Brain microvascular endothelial cell (primary cell): ENCODE measurements at regions of chr5 and their contacts with region 1.

Region 1: DNA sequence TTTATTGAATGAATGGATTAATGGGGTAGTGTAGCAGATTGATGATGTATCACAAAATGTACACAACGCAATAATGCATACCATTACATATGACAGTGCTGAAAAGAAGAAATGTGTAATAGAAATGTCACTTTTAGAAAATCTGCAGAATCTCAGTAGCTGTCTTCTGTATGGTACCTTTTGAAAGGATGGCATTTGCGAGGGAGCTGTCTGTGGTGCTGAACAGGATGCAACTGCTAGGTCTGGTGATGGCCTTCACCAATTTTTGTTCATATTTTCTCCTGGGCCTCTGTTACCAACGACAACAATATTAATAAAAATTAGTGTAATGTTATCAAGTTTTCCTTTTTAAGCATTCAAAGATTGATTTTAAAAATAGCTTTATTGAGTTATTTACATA is 36.2 kb upstream of the OTULIN start:
- DNase-seq: peak; percentile 50
- H3K4me3 ChIP-seq: no peak overlapping the region
- H3K27ac ChIP-seq: no peak overlapping the region
- H3K27me3 ChIP-seq: peaks cover 2% of the 10 kb centered on the region
- CTCF ChIP-seq: no peak

Region 2: GRCh38 chr5:14399054-14399692 is 229.2 kb before region 1 on chr5:
- in situ Hi-C with region 1: loop called (anchors 25 kb)
- DNase-seq: peak; percentile 68
- H3K4me3 ChIP-seq: no peak overlapping the region
- H3K27ac ChIP-seq: peak overlapping the region; percentile 34
- H3K27me3 ChIP-seq: no peaks in the 10 kb centered on the region
- CTCF ChIP-seq: peak; percentile 59

Region 3: GRCh38 chr5:14581333-14581890 is 46.9 kb before region 1 on chr5 and contains the start of gene OTULINL:
- in situ Hi-C with region 1: no loop called
- DNase-seq: peak; percentile 57
- H3K4me3 ChIP-seq: peak within 1 kb of the TSS; percentile 55
- H3K27ac ChIP-seq: no peak within 1 kb of the TSS
- H3K27me3 ChIP-seq: peaks cover 21% of the 10 kb centered on the region
- CTCF ChIP-seq: no peak